HepG2 (cell line): ENCODE measurements at regions of chr9 and their contacts with region 1.

Region 1: GRCh38 chr9:133347985-133348717 is at the starts of genes MED22 and RPL7A:
- DNase-seq: peak; percentile 94
- ATAC-seq: peak; percentile 73
- H3K4me3 ChIP-seq: peak within 1 kb of the TSS; percentile 82 to 100 (median 97)
- H3K27ac ChIP-seq: peak within 1 kb of the TSS; percentile 97
- H3K4me1 ChIP-seq: peaks cover 29% of the 10 kb centered on the region
- H3K27me3 ChIP-seq: no peaks in the 10 kb centered on the region; a peak in 1 of 5 replicates
- CTCF ChIP-seq: 0 out of 2 replicates have a peak, but pooled peaks have one; percentile 7
- EP300 ChIP-seq: 0 out of 4 replicates have a peak, but pooled peaks of 1 of the 2 experiments have one; percentile 26
- POLR2A ChIP-seq: peak in 1 of 2 experiments; percentile 99; a peak in 2 of 4 replicates
- RAD21 ChIP-seq: peak; percentile 25; the same call in 1 of the 2 replicates
- total RNA-seq, gene MED22: 19.6 and 22.1 TPM in 2 replicates
- total RNA-seq, gene RPL7A: 2,938 and 3,359 TPM in 2 replicates

Region 2: DNA sequence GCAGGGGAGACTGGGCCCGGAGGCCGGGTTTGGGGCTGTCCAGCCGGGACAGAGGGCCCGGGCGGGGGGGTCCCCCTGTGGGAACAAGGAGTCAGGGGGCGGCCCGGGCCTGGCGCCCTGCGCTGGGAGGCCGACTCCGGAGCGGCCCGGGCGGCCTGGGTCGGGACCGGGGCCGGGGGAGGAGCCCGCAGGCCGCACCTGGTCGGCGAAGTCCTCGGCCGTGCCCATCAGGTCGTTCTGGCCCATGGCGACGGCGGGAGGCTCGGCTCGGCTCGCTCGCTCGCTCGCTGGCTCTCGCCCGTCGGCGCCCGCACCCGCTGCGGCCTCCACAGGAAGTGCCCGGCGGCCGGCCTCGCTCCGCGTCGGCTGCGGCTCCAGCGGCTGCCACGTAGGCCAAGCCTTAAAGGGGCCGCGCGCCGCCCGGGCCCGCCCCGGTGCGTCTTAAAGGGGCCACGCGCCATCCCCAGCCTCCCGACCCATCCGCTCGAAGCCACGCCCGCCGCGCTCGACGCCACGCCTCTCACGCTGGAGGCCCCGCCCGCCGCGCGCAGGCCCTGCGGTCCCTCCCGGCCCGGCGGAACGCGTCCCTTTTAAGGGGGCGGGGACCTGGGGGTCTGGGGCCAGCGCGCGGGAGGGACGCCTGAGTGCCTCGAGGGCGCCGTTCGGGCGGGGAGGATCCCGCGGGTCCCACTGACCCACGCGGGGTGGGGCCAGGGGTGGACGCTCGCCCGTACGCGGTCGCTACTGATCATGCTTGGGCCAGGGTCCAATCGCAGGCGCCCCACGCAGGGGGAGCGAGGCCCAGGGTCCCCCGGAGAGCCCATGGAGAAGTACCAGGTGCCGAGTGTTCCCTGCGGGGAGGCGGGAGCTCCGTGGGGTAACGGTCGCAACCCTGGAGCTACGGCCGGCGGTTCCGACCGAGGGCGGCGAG is 27.8 kb after region 1 on chr9 and contains the starts of genes STKLD1 and SURF4:
- CTCF ChIA-PET with region 1: no interaction called
- POLR2A ChIA-PET with region 1: interaction called, 16 read pairs
- in situ Hi-C with region 1: no loop called
- intact Hi-C with region 1: no loop called
- DNase-seq: peak; percentile 86
- ATAC-seq: peak; percentile 87
- H3K4me3 ChIP-seq: peak within 1 kb of the TSS; percentile 72 to 86 (median 76)
- H3K27ac ChIP-seq: peak within 1 kb of the TSS; percentile 97
- H3K4me1 ChIP-seq: peaks cover 70% of the 10 kb centered on the region
- H3K27me3 ChIP-seq: no peaks in the 10 kb centered on the region
- CTCF ChIP-seq: no peak
- EP300 ChIP-seq: no peak
- POLR2A ChIP-seq: peak; percentile 81 to 82
- RAD21 ChIP-seq: peak; percentile 58
- total RNA-seq, gene STKLD1: 1.1 and 2.2 TPM in 2 replicates
- total RNA-seq, gene SURF4: 135 and 265 TPM in 2 replicates

Region 3: DNA sequence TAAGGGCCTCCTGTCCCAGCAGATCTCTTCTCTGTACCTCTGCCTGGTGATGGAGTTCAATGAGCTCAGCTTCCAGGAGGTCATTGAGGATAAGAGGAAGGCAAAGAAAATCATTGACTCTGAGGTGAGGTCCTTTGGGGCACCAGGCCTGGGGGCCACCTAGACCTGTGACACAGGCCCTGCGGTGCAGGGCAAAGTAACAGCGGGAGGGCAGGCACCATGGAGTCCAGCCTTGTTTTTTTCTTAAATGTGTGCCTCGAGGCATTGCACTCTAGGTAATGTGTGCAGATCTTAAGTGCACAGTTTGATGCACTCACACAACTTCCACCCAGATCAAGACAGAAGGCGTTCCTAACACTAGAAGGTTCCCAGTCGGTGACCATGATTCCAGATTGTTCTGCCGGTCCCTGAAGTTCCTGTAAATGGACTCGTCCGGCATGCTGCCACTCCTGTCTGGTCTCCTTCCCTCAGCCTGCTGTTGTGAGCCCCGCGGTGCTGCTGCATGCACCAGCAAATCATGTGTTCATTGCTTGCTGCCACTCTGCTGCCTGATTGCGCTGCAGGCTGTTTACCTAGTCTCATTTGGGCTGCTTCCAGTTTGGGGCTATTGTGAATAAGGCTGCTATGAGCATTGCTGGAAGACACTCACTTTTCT is 39.4 kb after region 1 on chr9:
- CTCF ChIA-PET with region 1: no interaction called
- POLR2A ChIA-PET with region 1: interaction called, 18 read pairs
- in situ Hi-C with region 1: no loop called
- intact Hi-C with region 1: no loop called
- DNase-seq: peak; percentile 17
- ATAC-seq: peak; percentile 23
- H3K4me3 ChIP-seq: peak overlapping the region in 1 of 3 experiments; percentile 27; a peak in 2 of 6 replicates
- H3K27ac ChIP-seq: no peak overlapping the region
- H3K4me1 ChIP-seq: peaks cover 81% of the 10 kb centered on the region
- H3K27me3 ChIP-seq: no peaks in the 10 kb centered on the region
- CTCF ChIP-seq: no peak
- EP300 ChIP-seq: no peak
- POLR2A ChIP-seq: no peak
- RAD21 ChIP-seq: no peak

Region 4: GRCh38 chr9:134871697-134872340 is 1523.7 kb after region 1 on chr9:
- CTCF ChIA-PET with region 1: no interaction called
- POLR2A ChIA-PET with region 1: no interaction called
- in situ Hi-C with region 1: no loop called
- intact Hi-C with region 1: no loop called
- DNase-seq: no peak
- ATAC-seq: no peak
- H3K4me3 ChIP-seq: no peak overlapping the region
- H3K27ac ChIP-seq: no peak overlapping the region
- H3K4me1 ChIP-seq: no peaks in the 10 kb centered on the region
- H3K27me3 ChIP-seq: peaks cover 2 to 27% of the 10 kb centered on the region in 2 experiments; a peak in 2 of 5 replicates
- CTCF ChIP-seq: no peak
- EP300 ChIP-seq: no peak
- POLR2A ChIP-seq: no peak
- RAD21 ChIP-seq: no peak